Naive thymus-derived CD8-positive, alpha-beta T cell (primary cell): ENCODE measurements at regions of chr3 and their contacts with region 1.

Region 1: GRCh38 chr3:122415720-122416654 is at the start of gene WDR5B:
- DNase-seq: peak; percentile 89 to 99 (median 98)
- ATAC-seq: peak; percentile 88 to 89
- H3K4me3 Mint-ChIP-seq: peak within 1 kb of the TSS; percentile 95 to 100 (median 98)
- H3K27ac Mint-ChIP-seq: peak within 1 kb of the TSS; percentile 96 to 100 (median 100)
- H3K4me1 Mint-ChIP-seq: peaks cover 30 to 65% (median 62%) of the 10 kb centered on the region in 4 donors
- H3K27me3 Mint-ChIP-seq: peaks cover 0 to 4% (median 0%) of the 10 kb centered on the region in 5 donors
- polyA plus RNA-seq, gene WDR5B: 1.2 to 2.2 (median 1.7) TPM

Region 2: DNA sequence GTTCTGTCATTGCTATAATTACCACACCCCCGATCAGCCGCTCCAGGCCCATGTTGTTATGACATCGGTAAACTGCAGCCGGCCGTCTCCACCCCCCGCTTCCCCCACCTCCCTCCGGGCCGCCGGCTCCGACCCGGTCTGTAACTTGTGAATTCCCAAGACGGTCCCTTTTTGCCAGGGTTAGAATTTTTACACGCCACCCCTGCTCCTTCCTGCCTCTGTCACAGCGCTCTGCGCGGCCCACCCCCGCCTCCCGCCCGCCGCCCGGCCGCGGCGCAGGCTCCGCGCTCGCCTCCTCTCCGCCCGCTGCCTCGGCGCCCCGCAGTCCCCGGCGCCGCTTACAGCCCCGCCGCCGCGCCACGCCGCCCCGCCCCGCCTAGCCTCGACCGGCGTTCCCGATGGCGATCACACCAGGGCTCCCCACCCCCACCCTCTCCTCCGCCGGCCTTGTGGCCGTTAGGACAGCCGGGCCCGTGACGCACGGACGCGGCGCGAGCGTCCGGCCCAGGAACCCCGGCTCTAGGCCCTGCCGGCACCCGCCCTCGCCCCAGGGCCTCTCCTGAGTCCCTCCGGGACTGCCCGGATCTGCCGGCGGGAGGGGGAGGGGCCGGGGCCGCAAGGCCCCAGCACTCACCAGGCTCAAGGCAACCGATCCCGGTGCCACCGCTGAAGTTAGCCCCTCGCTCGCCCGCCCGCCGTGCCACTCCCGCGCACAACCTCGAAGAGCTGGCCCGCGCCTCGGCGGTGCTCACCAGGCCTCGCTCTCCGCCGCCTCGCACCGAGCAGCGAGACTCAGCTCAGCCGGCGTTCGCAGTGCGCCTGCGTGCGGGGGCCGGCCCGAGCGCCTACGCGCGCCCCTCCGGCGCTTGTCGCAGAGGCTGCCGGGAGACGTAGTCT is 98.4 kb after region 1 on chr3 and contains the start of gene KPNA1:
- POLR2A ChIA-PET with region 1: interaction called, 17 read pairs
- DNase-seq: peak; percentile 78 to 91 (median 87)
- ATAC-seq: peak; percentile 87 to 89
- H3K4me3 Mint-ChIP-seq: peak within 1 kb of the TSS; percentile 82 to 95 (median 90)
- H3K27ac Mint-ChIP-seq: peak within 1 kb of the TSS; percentile 87 to 97 (median 93)
- H3K4me1 Mint-ChIP-seq: peaks cover 27 to 51% (median 45%) of the 10 kb centered on the region in 4 donors
- H3K27me3 Mint-ChIP-seq: no peaks in the 10 kb centered on the region
- polyA plus RNA-seq, gene KPNA1: 36.9 to 49.5 (median 41.7) TPM